GM18951 (cell line): ENCODE measurements at regions of chr11 and their contacts with region 1.

Region 1: DNA sequence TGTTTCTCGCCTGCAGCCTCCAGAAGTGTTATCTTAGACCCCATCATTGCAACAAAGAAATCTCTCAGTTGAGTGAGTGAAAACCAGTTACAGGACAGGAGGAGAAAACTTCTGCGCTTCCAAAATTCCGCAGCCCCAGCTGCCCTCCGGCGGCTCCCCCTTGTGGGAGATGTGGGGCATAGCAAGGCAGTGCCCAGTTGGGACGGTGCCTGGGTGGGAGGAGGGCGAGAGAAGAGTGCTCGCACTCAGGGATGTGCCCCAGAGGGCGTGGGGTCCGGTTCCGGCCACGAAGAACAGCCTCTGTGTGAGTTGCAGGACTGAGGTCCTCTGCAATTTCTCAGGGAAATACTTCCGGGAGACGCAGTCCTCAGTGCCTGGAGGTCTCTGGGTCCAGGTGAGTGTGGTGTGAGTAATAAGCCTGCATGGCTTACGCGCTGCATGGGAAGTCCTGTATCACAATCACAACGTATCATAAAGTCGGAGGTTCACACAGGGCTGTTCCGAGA is 87.0 kb upstream of the BLID start:
- POLR2A ChIP-seq: no peak

Region 2: GRCh38 chr11:121655537-121656327 is 547.3 kb before region 1 on chr11:
- in situ Hi-C with region 1: loop called (anchors 10 kb)
- POLR2A ChIP-seq: no peak